ENCODE measurements at regions of chrX and their contacts with region 1.

Region 1: GRCh38 chrX:53088136-53088974 is 5.6 kb upstream of the KANTR start:
- DNase-seq: peak; percentile 76
- H3K4me3 Mint-ChIP-seq: peak overlapping the region; percentile 79
- H3K27ac Mint-ChIP-seq: peak overlapping the region; percentile 85
- H3K4me1 Mint-ChIP-seq: peaks cover 39% of the 10 kb centered on the region
- H3K27me3 Mint-ChIP-seq: no peaks in the 10 kb centered on the region

Region 2: GRCh38 chrX:53071604-53072417 is 16.5 kb before region 1 on chrX:
- CTCF ChIA-PET with region 1: interaction called, 10 read pairs
- DNase-seq: peak; percentile 71
- H3K4me3 Mint-ChIP-seq: peak overlapping the region; percentile 70
- H3K27ac Mint-ChIP-seq: peak overlapping the region; percentile 83
- H3K4me1 Mint-ChIP-seq: peaks cover 17% of the 10 kb centered on the region
- H3K27me3 Mint-ChIP-seq: no peaks in the 10 kb centered on the region

Region 3: DNA sequence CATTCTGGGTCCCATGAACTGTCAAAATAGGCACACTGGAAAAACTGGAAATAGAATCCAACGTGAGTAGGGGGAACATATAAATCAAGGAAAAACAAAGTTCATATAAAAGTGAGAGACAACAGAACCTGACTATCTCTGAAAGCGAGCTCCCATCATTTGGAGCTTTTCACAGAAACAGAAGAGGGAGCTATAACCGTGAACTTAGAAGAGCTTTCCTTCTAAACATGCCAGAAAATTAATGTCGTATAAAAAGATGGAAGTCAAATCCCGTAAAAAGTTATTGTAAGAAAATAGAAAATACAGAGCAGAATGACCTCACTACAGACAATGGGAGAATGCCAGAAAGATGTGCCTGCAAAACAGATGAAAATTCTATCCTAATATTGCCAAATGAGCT is 369.7 kb after region 1 on chrX:
- CTCF ChIA-PET with region 1: no interaction called
- DNase-seq: no peak
- H3K4me3 Mint-ChIP-seq: no peak overlapping the region
- H3K27ac Mint-ChIP-seq: no peak overlapping the region
- H3K4me1 Mint-ChIP-seq: no peaks in the 10 kb centered on the region
- H3K27me3 Mint-ChIP-seq: peaks cover 10% of the 10 kb centered on the region